CD4-positive, alpha-beta T cell (primary cell): ENCODE measurements at regions of chr1 and their contacts with region 1.

Region 1: GRCh38 chr1:202852163-202852904 is 36.6 kb downstream of the RABIF start:
- DNase-seq: peak in 6 of 14 experiments; percentile 7 to 70 (median 40)
- ATAC-seq: peak; percentile 58
- H3K4me3 ChIP-seq: no peak overlapping the region
- H3K4me3 Mint-ChIP-seq: no peak overlapping the region
- H3K27ac ChIP-seq: no peak overlapping the region
- H3K27ac Mint-ChIP-seq: no peak overlapping the region
- H3K4me1 ChIP-seq: no peaks in the 10 kb centered on the region
- H3K4me1 Mint-ChIP-seq: no peaks in the 10 kb centered on the region
- H3K27me3 ChIP-seq: no peaks in the 10 kb centered on the region
- H3K27me3 Mint-ChIP-seq: no peaks in the 10 kb centered on the region
- CTCF ChIP-seq: no peak

Region 2: DNA sequence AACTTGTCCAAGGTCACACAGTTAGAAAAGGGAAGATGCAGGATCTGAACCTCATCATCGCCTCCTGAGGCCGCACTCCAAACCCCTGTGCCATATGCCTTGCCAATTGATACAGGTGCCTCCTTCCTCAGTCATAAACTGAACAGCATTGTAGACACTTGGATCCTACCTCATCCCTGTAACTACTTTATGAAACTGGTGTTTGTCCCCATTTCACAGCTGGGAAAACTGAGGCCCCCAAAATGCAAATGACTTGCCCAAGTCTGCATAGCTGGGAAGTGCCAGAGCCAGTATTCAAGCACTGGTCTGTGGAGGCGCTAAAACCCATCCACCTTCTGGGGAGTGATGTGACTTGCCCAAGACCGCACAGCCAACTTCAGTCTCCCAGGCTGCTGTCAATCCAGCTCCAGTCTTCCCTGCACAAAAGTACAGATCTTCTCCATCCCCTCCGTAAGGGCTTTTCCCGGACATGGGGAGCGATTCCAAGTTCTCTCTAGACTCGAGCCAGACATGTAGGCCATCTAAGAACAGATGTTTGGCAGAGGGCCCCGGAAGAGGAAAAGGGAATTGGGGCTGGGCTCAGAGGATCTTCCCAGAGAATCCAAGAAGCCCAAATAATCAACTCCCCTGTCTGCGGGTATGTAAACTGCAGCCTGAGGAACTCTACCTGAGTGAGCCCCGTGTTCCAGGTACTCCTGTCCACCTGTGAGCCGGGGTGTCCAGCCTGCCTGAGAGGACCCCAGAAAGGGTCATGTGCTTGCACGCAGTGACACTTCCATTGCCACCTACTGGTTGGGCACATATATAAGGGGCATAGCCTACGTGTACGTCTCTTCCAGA is 202.6 kb before region 1 on chr1:
- CTCF ChIA-PET with region 1: no interaction called
- POLR2A ChIA-PET with region 1: no interaction called
- intact Hi-C with region 1: loop called in 1 of 2 experiments (anchors 5 kb)
- DNase-seq: no peak
- ATAC-seq: no peak
- H3K4me3 ChIP-seq: no peak overlapping the region
- H3K4me3 Mint-ChIP-seq: no peak overlapping the region
- H3K27ac ChIP-seq: no peak overlapping the region
- H3K27ac Mint-ChIP-seq: no peak overlapping the region
- H3K4me1 ChIP-seq: peaks cover 1% of the 10 kb centered on the region
- H3K4me1 Mint-ChIP-seq: peaks cover 6% of the 10 kb centered on the region
- H3K27me3 ChIP-seq: peaks cover 11 to 19% of the 10 kb centered on the region in 2 experiments
- H3K27me3 Mint-ChIP-seq: peaks cover 80% of the 10 kb centered on the region
- CTCF ChIP-seq: no peak

Region 3: GRCh38 chr1:202750758-202751157 is 101.6 kb before region 1 on chr1:
- CTCF ChIA-PET with region 1: no interaction called
- POLR2A ChIA-PET with region 1: no interaction called
- intact Hi-C with region 1: loop called (anchors 2 to 5 kb)
- DNase-seq: peak in 2 of 14 experiments; percentile 12 to 17
- ATAC-seq: no peak
- H3K4me3 ChIP-seq: no peak overlapping the region
- H3K4me3 Mint-ChIP-seq: no peak overlapping the region
- H3K27ac ChIP-seq: no peak overlapping the region
- H3K27ac Mint-ChIP-seq: no peak overlapping the region
- H3K4me1 ChIP-seq: no peaks in the 10 kb centered on the region
- H3K4me1 Mint-ChIP-seq: no peaks in the 10 kb centered on the region
- H3K27me3 ChIP-seq: no peaks in the 10 kb centered on the region
- H3K27me3 Mint-ChIP-seq: no peaks in the 10 kb centered on the region
- CTCF ChIP-seq: peak; percentile 18

Region 4: GRCh38 chr1:202796302-202797069 is 55.8 kb before region 1 on chr1:
- CTCF ChIA-PET with region 1: no interaction called
- POLR2A ChIA-PET with region 1: no interaction called
- intact Hi-C with region 1: no loop called
- DNase-seq: no peak
- ATAC-seq: no peak
- H3K4me3 ChIP-seq: no peak overlapping the region
- H3K4me3 Mint-ChIP-seq: no peak overlapping the region
- H3K27ac ChIP-seq: no peak overlapping the region
- H3K27ac Mint-ChIP-seq: no peak overlapping the region
- H3K4me1 ChIP-seq: peaks cover 18% of the 10 kb centered on the region
- H3K4me1 Mint-ChIP-seq: peaks cover 49% of the 10 kb centered on the region
- H3K27me3 ChIP-seq: no peaks in the 10 kb centered on the region
- H3K27me3 Mint-ChIP-seq: no peaks in the 10 kb centered on the region
- CTCF ChIP-seq: no peak